CD4-positive, alpha-beta T cell (primary cell): ENCODE measurements at regions of chr19 and their contacts with region 1.

Region 1: DNA sequence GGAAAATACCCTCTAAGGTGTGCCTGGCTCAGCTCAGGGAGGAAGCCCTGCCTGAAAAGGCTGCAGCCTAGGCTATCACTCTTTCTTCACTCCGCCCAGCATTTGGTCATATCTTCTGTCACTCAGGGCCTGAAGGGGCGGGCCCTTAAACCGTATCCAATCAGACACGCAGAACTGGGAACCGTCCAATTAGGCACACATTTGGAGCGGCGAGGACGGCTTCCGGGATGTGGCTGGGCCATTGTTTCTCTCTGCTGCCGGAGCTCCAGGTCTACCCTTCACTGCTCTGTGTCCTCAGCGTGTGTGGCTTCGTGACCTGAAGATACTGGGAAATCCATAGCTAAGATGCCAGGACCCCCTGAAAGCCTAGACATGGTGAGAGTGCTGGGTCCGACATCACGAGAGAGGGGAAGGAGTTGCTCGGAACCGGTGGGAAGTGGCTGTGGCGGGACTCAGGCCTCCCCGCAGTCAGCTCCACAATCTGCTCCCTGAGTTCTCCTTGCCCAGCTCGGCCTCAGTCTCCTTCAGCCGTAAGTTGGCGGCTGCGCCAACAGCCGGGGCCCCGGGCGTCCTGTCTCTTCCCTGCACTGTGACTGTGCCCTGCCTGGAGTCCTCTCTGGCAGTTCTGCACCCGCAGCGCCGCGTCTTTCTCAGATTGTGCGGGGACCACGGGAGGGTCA is at the start of gene ZNF493:
- DNase-seq: peak; percentile 81 to 97 (median 86)
- ATAC-seq: peak; percentile 99
- H3K4me3 ChIP-seq: peak within 1 kb of the TSS; percentile 97
- H3K4me3 Mint-ChIP-seq: peak within 1 kb of the TSS; percentile 98
- H3K27ac ChIP-seq: peak within 1 kb of the TSS; percentile 47 to 72
- H3K27ac Mint-ChIP-seq: peak within 1 kb of the TSS; percentile 82
- H3K4me1 ChIP-seq: peaks cover 14% of the 10 kb centered on the region
- H3K4me1 Mint-ChIP-seq: peaks cover 43% of the 10 kb centered on the region
- H3K27me3 ChIP-seq: no peaks in the 10 kb centered on the region
- H3K27me3 Mint-ChIP-seq: no peaks in the 10 kb centered on the region
- CTCF ChIP-seq: no peak
- total RNA-seq, gene ZNF493: 39.5 to 41.2 TPM

Region 2: DNA sequence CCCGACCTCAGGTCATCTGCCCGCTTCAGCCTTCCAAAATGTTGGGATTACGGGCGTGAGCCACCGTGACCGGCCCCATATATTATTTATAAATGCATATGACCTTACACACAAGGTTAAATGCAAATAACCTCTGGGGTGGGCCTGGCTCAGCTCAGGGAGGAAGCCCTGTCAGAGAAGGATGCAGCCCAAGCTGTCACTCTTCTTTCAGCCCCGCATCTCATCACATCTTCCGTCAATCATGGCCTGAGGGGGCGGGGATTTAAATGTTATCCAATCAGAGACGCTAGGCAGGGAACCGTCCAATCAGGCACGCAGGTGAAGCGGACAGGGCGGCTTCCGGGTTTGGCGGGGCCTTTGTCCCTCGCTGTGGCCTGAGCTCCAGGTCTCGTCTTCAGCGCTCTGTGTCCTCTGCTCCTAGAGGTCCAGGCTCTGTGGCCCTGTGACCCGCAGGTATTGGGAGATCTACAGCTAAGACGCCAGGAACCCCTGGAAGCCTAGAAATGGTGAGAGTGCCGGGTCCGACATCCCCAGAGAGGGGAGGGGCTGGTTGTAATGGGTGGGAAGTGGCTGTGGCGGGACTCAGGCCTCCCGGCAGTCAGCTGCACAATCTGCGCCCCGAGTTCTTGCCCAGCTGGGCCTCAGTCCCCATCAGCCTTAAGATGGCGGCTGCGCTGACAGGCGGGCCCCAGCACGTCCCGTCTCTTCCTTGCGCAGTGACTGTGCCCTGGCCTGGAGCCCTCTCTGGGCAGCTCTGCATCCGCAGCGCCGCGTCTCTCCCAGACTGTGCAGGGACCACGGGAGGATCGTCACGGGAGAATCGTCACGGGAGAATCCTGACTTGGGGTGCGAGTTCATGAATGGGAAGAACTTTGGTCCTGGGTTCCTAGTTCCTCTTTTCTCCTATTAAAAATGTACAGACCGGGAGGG is 376.5 kb before region 1 on chr19 and contains the start of gene ZNF430:
- CTCF ChIA-PET with region 1: no interaction called
- POLR2A ChIA-PET with region 1: interaction called, 10 read pairs
- intact Hi-C with region 1: no loop called
- DNase-seq: peak; percentile 82 to 98 (median 87)
- ATAC-seq: peak; percentile 95
- H3K4me3 ChIP-seq: peak within 1 kb of the TSS; percentile 98
- H3K4me3 Mint-ChIP-seq: peak within 1 kb of the TSS; percentile 98
- H3K27ac ChIP-seq: peak within 1 kb of the TSS; percentile 86 to 93
- H3K27ac Mint-ChIP-seq: peak within 1 kb of the TSS; percentile 100
- H3K4me1 ChIP-seq: peaks cover 29% of the 10 kb centered on the region
- H3K4me1 Mint-ChIP-seq: peaks cover 52% of the 10 kb centered on the region
- H3K27me3 ChIP-seq: no peaks in the 10 kb centered on the region
- H3K27me3 Mint-ChIP-seq: no peaks in the 10 kb centered on the region
- CTCF ChIP-seq: no peak
- total RNA-seq, gene ZNF430: 40.5 to 43.8 TPM

Region 3: GRCh38 chr19:21328885-21329605 is 68.0 kb before region 1 on chr19 and contains the start of gene ZNF708:
- CTCF ChIA-PET with region 1: interaction called, 3 read pairs
- POLR2A ChIA-PET with region 1: interaction called, 48 read pairs
- intact Hi-C with region 1: loop called in 1 of 2 experiments (anchors 5 kb)
- DNase-seq: peak; percentile 41 to 96 (median 59)
- ATAC-seq: peak; percentile 91
- H3K4me3 ChIP-seq: peak within 1 kb of the TSS; percentile 99
- H3K4me3 Mint-ChIP-seq: peak within 1 kb of the TSS; percentile 96
- H3K27ac ChIP-seq: peak within 1 kb of the TSS; percentile 83 to 99
- H3K27ac Mint-ChIP-seq: peak within 1 kb of the TSS; percentile 98
- H3K4me1 ChIP-seq: peaks cover 22% of the 10 kb centered on the region
- H3K4me1 Mint-ChIP-seq: peaks cover 50% of the 10 kb centered on the region
- H3K27me3 ChIP-seq: no peaks in the 10 kb centered on the region
- H3K27me3 Mint-ChIP-seq: no peaks in the 10 kb centered on the region
- CTCF ChIP-seq: no peak
- total RNA-seq, gene ZNF708: 15.5 to 16.4 TPM

Region 4: GRCh38 chr19:21568816-21569493 is 171.9 kb after region 1 on chr19:
- CTCF ChIA-PET with region 1: no interaction called
- POLR2A ChIA-PET with region 1: interaction called, 18 read pairs
- intact Hi-C with region 1: no loop called
- DNase-seq: peak; percentile 48 to 97 (median 76)
- ATAC-seq: peak; percentile 96
- H3K4me3 ChIP-seq: peak overlapping the region; percentile 81
- H3K4me3 Mint-ChIP-seq: peak overlapping the region; percentile 100
- H3K27ac ChIP-seq: peak overlapping the region; percentile 47 to 56
- H3K27ac Mint-ChIP-seq: peak overlapping the region; percentile 99
- H3K4me1 ChIP-seq: no peaks in the 10 kb centered on the region
- H3K4me1 Mint-ChIP-seq: peaks cover 36% of the 10 kb centered on the region
- H3K27me3 ChIP-seq: no peaks in the 10 kb centered on the region
- H3K27me3 Mint-ChIP-seq: no peaks in the 10 kb centered on the region
- CTCF ChIP-seq: no peak

Region 5: GRCh38 chr19:21767065-21767800 is 370.2 kb after region 1 on chr19 and contains the start of gene ZNF100:
- CTCF ChIA-PET with region 1: no interaction called
- POLR2A ChIA-PET with region 1: interaction called, 10 read pairs
- intact Hi-C with region 1: no loop called
- DNase-seq: peak; percentile 73 to 92 (median 82)
- ATAC-seq: peak; percentile 98
- H3K4me3 ChIP-seq: peak within 1 kb of the TSS; percentile 94
- H3K4me3 Mint-ChIP-seq: peak within 1 kb of the TSS; percentile 95
- H3K27ac ChIP-seq: peak within 1 kb of the TSS; percentile 44 to 52
- H3K27ac Mint-ChIP-seq: peak within 1 kb of the TSS; percentile 87
- H3K4me1 ChIP-seq: peaks cover 13% of the 10 kb centered on the region
- H3K4me1 Mint-ChIP-seq: peaks cover 45% of the 10 kb centered on the region
- H3K27me3 ChIP-seq: no peaks in the 10 kb centered on the region
- H3K27me3 Mint-ChIP-seq: no peaks in the 10 kb centered on the region
- CTCF ChIP-seq: no peak
- total RNA-seq, gene ZNF100: 10.8 to 11.0 TPM